ENCODE measurements at regions of chr10 and their contacts with region 1.

Region 1: GRCh38 chr10:112092502-112092901 is 91.1 kb downstream of the GPAM start:
- DNase-seq: no peak
- H3K4me3 ChIP-seq: no peak overlapping the region
- H3K27ac ChIP-seq: no peak overlapping the region
- H3K4me1 ChIP-seq: no peaks in the 10 kb centered on the region
- H3K27me3 ChIP-seq: no peaks in the 10 kb centered on the region
- CTCF ChIP-seq: no peak
- EP300 ChIP-seq: no peak
- POLR2A ChIP-seq: no peak
- RAD21 ChIP-seq: no peak

Region 2: DNA sequence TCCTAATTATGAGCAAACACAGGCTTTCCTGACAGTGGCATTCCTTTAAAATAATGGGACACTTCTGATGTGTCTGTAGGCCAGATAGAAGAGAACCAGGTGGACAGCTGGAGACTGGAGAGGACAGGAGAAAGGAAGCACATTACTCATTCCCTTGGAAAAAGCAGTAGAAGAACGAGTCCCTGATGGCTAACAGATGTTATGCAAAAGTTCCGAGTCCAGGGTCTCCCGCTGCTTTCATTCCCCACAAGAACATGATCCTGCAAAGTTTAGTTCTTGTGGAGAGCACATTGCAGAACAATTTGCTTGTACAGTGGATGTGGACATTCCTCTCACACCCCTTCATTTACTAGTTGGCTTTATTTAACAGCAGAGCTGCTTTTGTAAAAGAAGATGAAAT is 46.6 kb before region 1 on chr10:
- CTCF ChIA-PET with region 1: no interaction called
- POLR2A ChIA-PET with region 1: no interaction called
- DNase-seq: no peak
- H3K4me3 ChIP-seq: no peak overlapping the region
- H3K27ac ChIP-seq: no peak overlapping the region
- H3K4me1 ChIP-seq: no peaks in the 10 kb centered on the region
- H3K27me3 ChIP-seq: no peaks in the 10 kb centered on the region
- CTCF ChIP-seq: no peak
- EP300 ChIP-seq: no peak
- POLR2A ChIP-seq: no peak
- RAD21 ChIP-seq: no peak

Region 3: DNA sequence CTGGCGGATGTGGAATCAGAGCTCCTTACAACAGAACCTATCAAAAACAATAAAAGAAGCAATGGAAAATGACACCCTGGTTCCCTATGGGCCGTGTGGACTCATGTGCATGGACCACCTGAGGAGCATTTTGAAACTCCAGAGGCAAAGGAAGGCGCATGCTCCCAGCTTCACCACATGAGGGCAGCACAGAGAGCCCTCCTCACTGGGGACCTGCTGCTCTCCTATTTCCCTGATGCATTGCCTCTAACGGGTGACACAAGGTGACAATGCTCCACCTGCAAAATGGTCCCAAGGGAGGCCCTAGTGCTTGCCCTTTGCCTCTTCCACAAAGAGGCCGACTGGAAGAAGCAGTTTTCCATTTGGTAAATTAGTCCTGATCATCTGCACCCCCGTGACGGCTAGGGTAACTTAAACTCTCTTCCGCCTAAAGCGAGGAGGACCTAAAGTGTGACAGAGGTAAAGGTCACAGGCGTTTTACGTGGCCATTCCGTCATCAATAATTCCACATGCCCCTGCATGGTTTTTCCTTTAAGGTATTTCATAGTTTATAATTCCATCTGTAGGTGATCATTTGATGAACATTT is 23.4 kb after region 1 on chr10:
- CTCF ChIA-PET with region 1: interaction called, 10 read pairs
- POLR2A ChIA-PET with region 1: no interaction called
- DNase-seq: peak; percentile 19 to 76
- H3K4me3 ChIP-seq: no peak overlapping the region
- H3K27ac ChIP-seq: no peak overlapping the region
- H3K4me1 ChIP-seq: no peaks in the 10 kb centered on the region; a peak in 1 of 7 replicates
- H3K27me3 ChIP-seq: no peaks in the 10 kb centered on the region
- CTCF ChIP-seq: peak; percentile 79 to 94 (median 92)
- EP300 ChIP-seq: no peak
- POLR2A ChIP-seq: no peak
- RAD21 ChIP-seq: peak; percentile 68 to 75

Measured in H1 (cell line).